Dendritic cell treated with granulocyte-macrophage colony-stimulating factor and Interleukin-4, amounts not matched to agents 40 ng/mL and 50 ng/mL, for 4 days (primary cell): ENCODE measurements at regions of chr1 and their contacts with region 1.

Region 1: GRCh38 chr1:90721210-90722194 is 4.4 kb upstream of the BARHL2 start:
- H3K4me3 Mint-ChIP-seq: no peak overlapping the region
- H3K27ac Mint-ChIP-seq: no peak overlapping the region
- H3K4me1 Mint-ChIP-seq: peaks cover 71% of the 10 kb centered on the region
- H3K27me3 Mint-ChIP-seq: peaks cover 95% of the 10 kb centered on the region

Region 2: GRCh38 chr1:90841473-90841872 is 120.0 kb after region 1 on chr1:
- intact Hi-C with region 1: loop called (anchors 10 kb)
- H3K4me3 Mint-ChIP-seq: no peak overlapping the region
- H3K27ac Mint-ChIP-seq: no peak overlapping the region
- H3K4me1 Mint-ChIP-seq: peaks cover 2% of the 10 kb centered on the region
- H3K27me3 Mint-ChIP-seq: peaks cover 92% of the 10 kb centered on the region

Region 3: DNA sequence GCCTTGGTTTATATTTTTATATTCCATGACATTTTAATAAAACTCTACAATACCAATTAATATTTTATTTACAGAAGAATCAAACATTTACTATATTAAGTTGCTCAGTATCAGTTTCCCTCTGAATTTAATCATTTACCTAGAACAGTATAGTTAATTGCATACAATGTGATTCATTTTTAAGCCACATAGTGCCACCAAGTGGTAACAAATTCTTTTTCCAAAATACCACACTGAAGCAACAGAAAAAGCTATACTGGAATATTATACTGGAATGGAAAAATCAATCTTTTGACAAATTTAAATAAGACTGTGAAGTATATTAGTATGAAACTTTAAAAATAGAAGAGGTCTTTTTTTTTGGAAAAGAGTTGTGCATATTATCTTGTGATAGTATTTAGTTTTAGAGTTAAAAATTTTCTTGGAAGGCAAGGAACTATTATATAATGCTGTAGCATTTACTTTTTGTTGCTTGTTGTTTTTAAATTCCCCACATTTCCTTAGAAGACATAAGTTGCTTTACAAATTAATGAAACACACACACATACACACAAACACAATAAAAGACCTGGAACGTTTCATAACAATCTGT is 243.0 kb after region 1 on chr1:
- intact Hi-C with region 1: loop called (anchors 5 kb)
- H3K4me3 Mint-ChIP-seq: no peak overlapping the region
- H3K27ac Mint-ChIP-seq: no peak overlapping the region
- H3K4me1 Mint-ChIP-seq: peaks cover 36% of the 10 kb centered on the region
- H3K27me3 Mint-ChIP-seq: no peaks in the 10 kb centered on the region